PC-9 (cell line): ENCODE measurements at regions of chr4 and their contacts with region 1.

Region 1: DNA sequence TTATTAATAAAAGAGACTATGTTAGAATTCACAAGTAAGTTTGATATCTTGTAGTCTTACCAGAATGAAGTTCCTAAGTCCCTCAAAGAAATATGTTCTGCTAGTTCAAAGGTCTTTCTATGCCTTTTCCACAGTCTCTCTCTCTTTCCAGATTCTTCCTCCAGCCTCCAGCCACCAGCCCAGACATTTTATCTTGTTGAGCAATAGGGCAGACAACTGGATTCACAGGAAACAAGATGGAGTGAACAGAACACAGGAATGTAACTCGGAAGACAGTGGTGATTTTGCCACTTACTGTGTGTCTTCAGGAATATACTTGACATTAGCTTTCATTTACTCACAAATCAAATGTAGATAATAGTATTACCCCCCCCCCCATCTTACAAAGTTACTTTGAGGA is 17.1 kb upstream of the CPEB2 start:
- DNase-seq: no peak
- H3K4me3 ChIP-seq: no peak overlapping the region
- H3K27ac ChIP-seq: no peak overlapping the region
- H3K4me1 ChIP-seq: no peaks in the 10 kb centered on the region
- H3K27me3 ChIP-seq: no peaks in the 10 kb centered on the region
- CTCF ChIP-seq: no peak

Region 2: GRCh38 chr4:14856076-14856933 is 128.9 kb before region 1 on chr4:
- CTCF ChIA-PET with region 1: no interaction called
- POLR2A ChIA-PET with region 1: interaction called, 10 read pairs
- intact Hi-C with region 1: no loop called
- DNase-seq: peak; percentile 77 to 94
- H3K4me3 ChIP-seq: no peak overlapping the region
- H3K27ac ChIP-seq: peak overlapping the region; percentile 72
- H3K4me1 ChIP-seq: peaks cover 18% of the 10 kb centered on the region
- H3K27me3 ChIP-seq: no peaks in the 10 kb centered on the region
- CTCF ChIP-seq: no peak

Region 3: DNA sequence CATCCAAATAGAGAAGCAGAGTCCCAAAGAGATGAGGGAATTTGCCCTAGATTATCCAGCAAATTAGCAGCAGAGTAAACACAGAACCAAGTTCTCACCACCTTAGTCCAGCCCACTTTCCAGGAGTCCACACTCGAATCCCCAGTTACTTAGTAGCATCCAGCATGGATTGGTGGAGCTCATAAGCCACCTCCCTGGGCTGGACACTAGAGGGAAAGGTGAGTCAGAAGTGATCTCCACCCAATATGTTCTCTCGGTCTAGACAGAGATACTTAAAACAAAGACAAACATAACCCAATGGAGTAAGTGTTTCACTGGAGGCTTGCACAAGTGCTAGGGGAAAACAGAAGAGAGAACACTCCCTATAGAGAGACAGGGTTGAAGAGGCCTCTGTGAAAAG is 87.9 kb before region 1 on chr4:
- CTCF ChIA-PET with region 1: no interaction called
- POLR2A ChIA-PET with region 1: no interaction called
- intact Hi-C with region 1: no loop called
- DNase-seq: no peak
- H3K4me3 ChIP-seq: no peak overlapping the region
- H3K27ac ChIP-seq: no peak overlapping the region
- H3K4me1 ChIP-seq: 0 out of 2 replicates have a peak, but pooled peaks cover 5% of the 10 kb centered on the region
- H3K27me3 ChIP-seq: no peaks in the 10 kb centered on the region
- CTCF ChIP-seq: no peak